ENCODE measurements at regions of chr1 and their contacts with region 1.

Region 1: DNA sequence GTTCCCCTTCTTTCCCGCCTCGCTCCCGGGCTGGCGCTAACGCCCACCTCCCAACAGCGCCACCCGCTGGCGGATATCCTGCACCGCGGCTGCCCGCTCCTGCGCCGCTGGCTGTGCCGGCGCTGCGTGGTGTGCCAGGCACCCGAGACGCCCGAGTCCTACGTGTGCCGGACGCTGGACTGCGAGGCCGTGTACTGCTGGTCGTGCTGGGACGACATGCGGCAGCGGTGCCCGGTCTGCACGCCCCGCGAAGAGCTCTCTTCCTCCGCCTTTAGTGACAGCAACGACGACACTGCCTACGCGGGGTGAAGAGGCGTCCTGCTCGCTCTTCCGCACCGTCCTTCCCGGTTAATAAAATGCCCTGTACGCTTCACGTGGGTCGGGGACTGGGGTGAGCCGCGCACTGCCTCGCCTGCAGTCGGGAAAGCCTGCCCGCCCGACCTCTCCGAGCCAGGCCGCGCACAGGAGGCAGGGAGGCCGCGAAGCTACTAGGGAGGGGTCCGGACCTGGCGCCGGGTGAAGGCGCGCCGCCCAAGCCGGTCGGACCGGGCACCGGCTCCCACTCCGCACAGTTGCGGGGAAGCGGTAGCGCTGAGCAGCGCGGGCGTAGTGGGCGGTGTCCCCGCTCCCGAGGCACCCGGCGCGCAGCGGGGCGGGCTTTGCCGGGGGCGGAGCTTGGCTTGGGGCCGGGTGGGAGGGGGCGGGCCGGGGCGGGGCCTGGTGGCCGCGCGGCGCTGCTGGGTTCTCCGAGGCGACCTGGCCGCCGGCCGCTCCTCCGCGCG is at the start of gene ADAM15:
- DNase-seq: peak; percentile 55 to 81 (median 72)
- H3K4me3 ChIP-seq: peak within 1 kb of the TSS; percentile 45 to 88 (median 79)
- H3K27ac ChIP-seq: peak within 1 kb of the TSS; percentile 8 to 43
- H3K4me1 ChIP-seq: peaks cover 3 to 43% (median 40%) of the 10 kb centered on the region in 4 experiments
- H3K27me3 ChIP-seq: no peaks in the 10 kb centered on the region

Region 2: GRCh38 chr1:154860156-154860870 is 190.4 kb before region 1 on chr1:
- CTCF ChIA-PET with region 1: no interaction called
- POLR2A ChIA-PET with region 1: no interaction called
- DNase-seq: peak in 1 of 3 donors; percentile 30
- H3K4me3 ChIP-seq: no peak overlapping the region
- H3K27ac ChIP-seq: no peak overlapping the region
- H3K4me1 ChIP-seq: peaks cover 0 to 20% (median 1%) of the 10 kb centered on the region in 4 experiments
- H3K27me3 ChIP-seq: peaks cover 0 to 3% (median 0%) of the 10 kb centered on the region in 5 experiments

Region 3: GRCh38 chr1:155078469-155079209 is 27.9 kb after region 1 on chr1 and contains the start of gene EFNA3:
- CTCF ChIA-PET with region 1: interaction called, 168 read pairs
- POLR2A ChIA-PET with region 1: no interaction called
- DNase-seq: peak in 2 of 3 donors; percentile 49 to 56
- H3K4me3 ChIP-seq: peak within 1 kb of the TSS in 5 of 7 experiments; percentile 32 to 62 (median 46)
- H3K27ac ChIP-seq: no peak within 1 kb of the TSS
- H3K4me1 ChIP-seq: peaks cover 3 to 58% (median 55%) of the 10 kb centered on the region in 4 experiments
- H3K27me3 ChIP-seq: peaks cover 0 to 59% (median 37%) of the 10 kb centered on the region in 5 experiments

Region 4: GRCh38 chr1:155117617-155118016 is 66.9 kb after region 1 on chr1:
- CTCF ChIA-PET with region 1: no interaction called
- POLR2A ChIA-PET with region 1: no interaction called
- DNase-seq: no peak
- H3K4me3 ChIP-seq: no peak overlapping the region
- H3K27ac ChIP-seq: no peak overlapping the region
- H3K4me1 ChIP-seq: no peaks in the 10 kb centered on the region
- H3K27me3 ChIP-seq: no peaks in the 10 kb centered on the region